Breast epithelium (tissue), 4 donors: ENCODE measurements at regions of chr16 and their contacts with region 1.

Region 1: GRCh38 chr16:65349626-65350025 is 227.8 kb upstream of the CDH11 start:
- DNase-seq: no peak
- H3K4me3 ChIP-seq: no peak overlapping the region
- H3K27ac ChIP-seq: no peak overlapping the region
- H3K4me1 ChIP-seq: no peaks in the 10 kb centered on the region
- H3K27me3 ChIP-seq: no peaks in the 10 kb centered on the region
- CTCF ChIP-seq: no peak
- POLR2A ChIP-seq: no peak

Region 2: DNA sequence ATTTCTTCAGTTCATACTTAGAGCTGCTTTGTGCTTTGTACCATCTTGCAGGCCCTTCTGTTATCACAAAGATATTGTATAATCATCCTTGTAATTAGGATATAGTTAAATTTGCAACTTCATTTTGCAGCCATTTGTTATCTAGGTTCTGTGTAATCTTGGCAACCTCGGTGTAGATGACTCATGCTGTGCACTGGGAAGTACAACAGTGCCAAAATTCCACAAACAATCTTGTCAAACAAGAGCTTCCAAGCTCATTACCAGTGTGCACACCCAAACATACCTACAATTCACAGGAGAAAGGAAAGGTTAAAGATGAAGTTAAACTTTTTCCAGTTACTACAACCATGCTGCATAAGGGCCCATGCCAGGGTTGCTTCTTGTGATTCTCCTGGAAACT is 1459.5 kb before region 1 on chr16:
- intact Hi-C with region 1: loop called (anchors 5 kb)
- DNase-seq: no peak
- H3K4me3 ChIP-seq: no peak overlapping the region
- H3K27ac ChIP-seq: no peak overlapping the region
- H3K4me1 ChIP-seq: no peaks in the 10 kb centered on the region
- H3K27me3 ChIP-seq: no peaks in the 10 kb centered on the region
- CTCF ChIP-seq: no peak
- POLR2A ChIP-seq: no peak

Region 3: GRCh38 chr16:65285128-65286048 is 64.2 kb before region 1 on chr16:
- intact Hi-C with region 1: no loop called
- DNase-seq: no peak
- H3K4me3 ChIP-seq: no peak overlapping the region
- H3K27ac ChIP-seq: no peak overlapping the region
- H3K4me1 ChIP-seq: no peaks in the 10 kb centered on the region
- H3K27me3 ChIP-seq: no peaks in the 10 kb centered on the region
- CTCF ChIP-seq: no peak
- POLR2A ChIP-seq: no peak